ENCODE measurements at regions of chr13 and their contacts with region 1.

Region 1: GRCh38 chr13:42271337-42272114 is 426 bp upstream of the AKAP11 start:
- DNase-seq: peak; percentile 98
- H3K4me3 Mint-ChIP-seq: peak overlapping the region; percentile 97
- H3K27ac Mint-ChIP-seq: peak overlapping the region; percentile 99
- H3K4me1 Mint-ChIP-seq: peaks cover 44% of the 10 kb centered on the region
- H3K27me3 Mint-ChIP-seq: peaks cover 3% of the 10 kb centered on the region

Region 2: GRCh38 chr13:42048682-42049453 is 222.7 kb before region 1 on chr13:
- intact Hi-C with region 1: loop called (anchors 2 kb)
- DNase-seq: peak; percentile 89
- H3K4me3 Mint-ChIP-seq: peak overlapping the region; percentile 90
- H3K27ac Mint-ChIP-seq: peak overlapping the region; percentile 79
- H3K4me1 Mint-ChIP-seq: peaks cover 20% of the 10 kb centered on the region
- H3K27me3 Mint-ChIP-seq: peaks cover 12% of the 10 kb centered on the region

Region 3: GRCh38 chr13:42354241-42355091 is 82.9 kb after region 1 on chr13:
- intact Hi-C with region 1: loop called (anchors 1 kb)
- DNase-seq: peak; percentile 80
- H3K4me3 Mint-ChIP-seq: peak overlapping the region; percentile 77
- H3K27ac Mint-ChIP-seq: peak overlapping the region; percentile 99
- H3K4me1 Mint-ChIP-seq: peaks cover 54% of the 10 kb centered on the region
- H3K27me3 Mint-ChIP-seq: no peaks in the 10 kb centered on the region

Region 4: DNA sequence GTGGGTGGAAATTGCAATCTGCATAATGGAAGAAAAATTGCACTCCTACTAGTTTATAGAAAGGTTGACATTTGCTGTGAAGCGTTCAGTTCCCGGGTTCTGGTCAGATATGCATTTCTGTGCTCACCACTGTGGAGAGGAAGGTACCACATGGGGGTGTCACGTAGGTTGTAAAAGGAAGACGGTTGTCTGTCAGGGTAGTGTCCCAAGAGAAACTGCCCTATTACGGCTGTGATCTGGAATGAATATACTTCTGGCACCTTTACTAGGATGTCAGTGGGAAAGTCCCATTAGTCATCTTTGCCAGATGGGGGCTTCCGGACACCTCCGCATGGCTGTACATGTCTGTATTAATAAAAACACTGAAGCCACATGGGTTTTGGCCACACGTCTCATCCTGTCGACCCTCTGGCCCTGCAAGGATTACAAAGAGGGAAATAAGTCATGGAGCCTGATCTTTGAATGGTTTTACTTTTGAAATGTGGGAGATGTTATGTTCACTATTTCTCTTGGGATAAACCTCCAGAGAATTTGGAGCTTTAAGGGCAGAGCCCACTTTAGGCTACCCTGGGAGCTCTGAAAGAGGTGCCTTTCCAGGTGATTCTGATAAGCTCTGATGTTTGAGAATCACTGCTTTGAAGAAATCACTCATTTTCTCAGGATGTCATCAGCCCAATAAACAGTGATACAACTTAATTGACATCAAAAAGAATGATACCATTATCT is 134.3 kb after region 1 on chr13:
- intact Hi-C with region 1: loop called (anchors 1 kb)
- DNase-seq: peak; percentile 81
- H3K4me3 Mint-ChIP-seq: peak overlapping the region; percentile 51
- H3K27ac Mint-ChIP-seq: peak overlapping the region; percentile 95
- H3K4me1 Mint-ChIP-seq: peaks cover 58% of the 10 kb centered on the region
- H3K27me3 Mint-ChIP-seq: no peaks in the 10 kb centered on the region

Region 5: DNA sequence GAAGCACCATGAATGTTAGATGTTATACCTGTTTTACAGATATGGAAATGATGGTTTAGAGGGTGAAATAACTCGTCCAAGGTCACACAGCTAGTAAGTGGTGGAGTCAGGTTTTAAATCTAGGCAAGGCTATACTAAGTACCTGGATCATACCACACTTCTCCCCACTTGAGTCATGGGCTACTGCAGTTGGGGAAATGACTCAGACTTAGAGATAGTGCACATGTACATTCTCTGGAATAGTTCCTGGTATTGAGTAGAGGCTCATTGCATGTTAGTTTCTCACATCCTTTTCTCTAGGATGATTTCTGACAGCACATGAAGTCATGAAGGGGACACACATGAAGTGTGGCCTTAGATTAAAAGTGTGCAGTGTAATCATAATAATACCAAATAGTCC is 226.3 kb after region 1 on chr13:
- intact Hi-C with region 1: loop called (anchors 1 kb)
- DNase-seq: peak; percentile 72
- H3K4me3 Mint-ChIP-seq: no peak overlapping the region
- H3K27ac Mint-ChIP-seq: peak overlapping the region; percentile 61
- H3K4me1 Mint-ChIP-seq: peaks cover 47% of the 10 kb centered on the region
- H3K27me3 Mint-ChIP-seq: no peaks in the 10 kb centered on the region

Measured in activated CD4-positive, alpha-beta T cell treated with anti-CD3 and anti-CD28 coated beads, Interleukin-2, amount 10 ng/mL, durations not matched to agents 24 days and 14 days (primary cell).